CD4-positive, alpha-beta memory T cell (primary cell): ENCODE measurements at regions of chr14 and their contacts with region 1.

Region 1: DNA sequence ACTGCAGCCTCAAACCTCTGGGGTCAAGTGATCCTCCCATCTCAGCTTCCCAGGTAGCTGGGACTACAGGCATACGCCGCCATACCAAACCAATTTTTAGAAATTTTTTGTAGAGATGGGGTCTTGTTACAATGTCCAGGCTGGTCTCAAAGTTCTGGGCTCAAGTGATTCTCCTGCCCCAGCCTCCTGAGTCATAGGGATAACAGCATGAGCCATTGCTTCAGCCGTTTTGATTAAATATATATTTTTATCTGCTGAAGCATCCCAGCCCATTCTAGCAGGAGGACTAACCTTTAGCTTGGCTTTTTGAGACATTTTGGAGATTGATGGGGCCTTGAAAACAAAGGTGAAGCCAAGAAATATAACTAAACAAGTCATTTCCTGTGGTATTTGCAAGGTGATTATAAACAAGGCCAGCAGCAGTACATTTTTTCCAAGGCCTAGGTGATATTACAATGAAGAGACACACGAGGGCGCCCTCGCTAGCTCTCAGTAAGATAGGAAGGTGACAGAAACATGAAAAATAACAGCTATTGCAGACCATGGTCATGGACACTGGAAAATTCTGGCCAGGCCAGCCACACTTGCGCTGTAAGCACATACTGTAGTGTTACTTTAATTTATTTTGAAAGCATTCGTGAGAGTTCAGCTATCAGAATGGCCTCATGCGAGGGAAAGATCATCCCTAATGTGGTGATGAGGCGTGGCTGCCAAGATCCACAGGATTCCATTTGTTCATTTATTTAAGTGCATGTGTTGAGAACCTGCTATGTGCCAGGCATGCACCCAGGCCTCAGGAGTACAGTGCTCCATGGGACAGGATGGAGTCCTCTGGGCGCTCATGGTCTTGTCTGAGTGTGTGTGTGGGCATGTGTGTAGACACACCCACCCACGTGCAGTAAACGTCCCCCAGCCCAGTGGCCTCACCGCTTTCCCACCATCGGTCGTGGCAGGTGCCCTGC is 63.5 kb downstream of the DGLUCY start:
- DNase-seq: peak; percentile 75 to 79 (median 77)
- H3K4me3 ChIP-seq: no peak overlapping the region
- H3K4me3 Mint-ChIP-seq: no peak overlapping the region
- H3K27ac ChIP-seq: peak overlapping the region; percentile 35
- H3K27ac Mint-ChIP-seq: peak overlapping the region; percentile 65 to 97 (median 94)
- H3K4me1 ChIP-seq: peaks cover 12% of the 10 kb centered on the region
- H3K4me1 Mint-ChIP-seq: peaks cover 13 to 23% (median 15%) of the 10 kb centered on the region in 4 donors
- H3K27me3 ChIP-seq: no peaks in the 10 kb centered on the region
- H3K27me3 Mint-ChIP-seq: no peaks in the 10 kb centered on the region

Region 2: DNA sequence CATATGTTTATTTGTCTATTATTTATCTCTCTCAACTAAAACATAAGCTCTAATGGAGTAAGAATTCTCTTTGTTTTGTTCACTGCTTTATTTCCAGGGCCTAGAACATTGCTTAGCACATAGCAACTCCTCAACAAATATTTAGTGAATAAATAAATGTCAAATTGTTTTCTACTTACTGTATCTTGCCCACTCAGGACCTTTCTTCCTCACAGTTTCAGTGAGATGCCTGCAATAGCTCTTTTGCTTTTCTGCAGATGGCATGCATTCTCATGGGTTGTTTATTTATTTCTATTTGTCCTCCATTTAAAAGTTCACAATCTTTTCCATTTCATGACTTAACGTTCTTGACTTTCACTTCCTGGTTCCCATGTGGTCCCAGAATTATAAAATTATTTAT is 266.2 kb before region 1 on chr14:
- CTCF ChIA-PET with region 1: interaction called, 10 read pairs
- POLR2A ChIA-PET with region 1: no interaction called
- intact Hi-C with region 1: no loop called
- DNase-seq: no peak
- H3K4me3 ChIP-seq: no peak overlapping the region
- H3K4me3 Mint-ChIP-seq: no peak overlapping the region
- H3K27ac ChIP-seq: no peak overlapping the region
- H3K27ac Mint-ChIP-seq: peak overlapping the region in 3 of 7 donors; percentile 1 to 36 (median 19)
- H3K4me1 ChIP-seq: no peaks in the 10 kb centered on the region
- H3K4me1 Mint-ChIP-seq: peaks cover 0 to 11% (median 9%) of the 10 kb centered on the region in 4 donors
- H3K27me3 ChIP-seq: no peaks in the 10 kb centered on the region
- H3K27me3 Mint-ChIP-seq: no peaks in the 10 kb centered on the region

Region 3: GRCh38 chr14:91060351-91061055 is 116.9 kb before region 1 on chr14 and contains the start of gene RPS6KA5:
- CTCF ChIA-PET with region 1: interaction called, 32 read pairs
- POLR2A ChIA-PET with region 1: interaction called, 35 read pairs
- intact Hi-C with region 1: loop called (anchors 1 kb)
- DNase-seq: peak; percentile 99 to 100 (median 100)
- H3K4me3 ChIP-seq: peak within 1 kb of the TSS; percentile 17 to 78
- H3K4me3 Mint-ChIP-seq: peak within 1 kb of the TSS; percentile 87 to 90 (median 88)
- H3K27ac ChIP-seq: peak within 1 kb of the TSS; percentile 63
- H3K27ac Mint-ChIP-seq: peak within 1 kb of the TSS; percentile 73 to 90 (median 80)
- H3K4me1 ChIP-seq: peaks cover 67% of the 10 kb centered on the region
- H3K4me1 Mint-ChIP-seq: peaks cover 44 to 72% (median 57%) of the 10 kb centered on the region in 4 donors
- H3K27me3 ChIP-seq: no peaks in the 10 kb centered on the region
- H3K27me3 Mint-ChIP-seq: no peaks in the 10 kb centered on the region
- total RNA-seq, gene RPS6KA5: 42.9 to 44.7 TPM

Region 4: DNA sequence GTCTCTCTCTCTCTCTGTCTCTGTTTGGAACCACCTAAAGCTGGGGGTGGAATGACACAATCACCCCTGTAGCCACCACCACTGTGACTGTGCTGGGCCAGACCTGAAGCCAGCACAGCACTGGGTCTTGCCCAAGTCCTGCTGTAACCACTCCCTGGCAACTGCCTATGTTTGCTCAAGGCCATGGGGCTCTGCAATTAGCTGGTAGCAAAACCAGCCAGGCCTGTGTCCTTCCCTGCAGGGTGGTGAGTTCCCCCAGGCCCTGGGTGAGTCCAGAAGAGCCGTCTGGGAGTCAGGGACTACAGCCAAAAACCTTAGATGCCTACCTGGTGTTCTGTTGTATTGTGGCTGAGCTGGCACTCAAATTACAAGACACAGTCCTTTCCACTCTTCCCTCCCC is 12.7 kb before region 1 on chr14:
- CTCF ChIA-PET with region 1: interaction called, 24 read pairs
- POLR2A ChIA-PET with region 1: no interaction called
- intact Hi-C with region 1: no loop called
- DNase-seq: no peak
- H3K4me3 ChIP-seq: no peak overlapping the region
- H3K4me3 Mint-ChIP-seq: no peak overlapping the region
- H3K27ac ChIP-seq: no peak overlapping the region
- H3K27ac Mint-ChIP-seq: peak overlapping the region in 3 of 7 donors; percentile 42 to 73 (median 47)
- H3K4me1 ChIP-seq: no peaks in the 10 kb centered on the region
- H3K4me1 Mint-ChIP-seq: peaks cover 0 to 1% (median 0%) of the 10 kb centered on the region in 4 donors
- H3K27me3 ChIP-seq: no peaks in the 10 kb centered on the region
- H3K27me3 Mint-ChIP-seq: no peaks in the 10 kb centered on the region

Region 5: GRCh38 chr14:91228112-91229004 is 51.0 kb after region 1 on chr14:
- CTCF ChIA-PET with region 1: interaction called, 28 read pairs
- POLR2A ChIA-PET with region 1: interaction called, 9 read pairs
- intact Hi-C with region 1: loop called (anchors 2 kb)
- DNase-seq: peak; percentile 74 to 96 (median 77)
- H3K4me3 ChIP-seq: peak overlapping the region; percentile 2 to 28
- H3K4me3 Mint-ChIP-seq: peak overlapping the region; percentile 41 to 97 (median 86)
- H3K27ac ChIP-seq: peak overlapping the region; percentile 88
- H3K27ac Mint-ChIP-seq: peak overlapping the region; percentile 97 to 100 (median 99)
- H3K4me1 ChIP-seq: peaks cover 98% of the 10 kb centered on the region
- H3K4me1 Mint-ChIP-seq: peaks cover 78 to 100% (median 91%) of the 10 kb centered on the region in 4 donors
- H3K27me3 ChIP-seq: no peaks in the 10 kb centered on the region
- H3K27me3 Mint-ChIP-seq: no peaks in the 10 kb centered on the region

Region 6: GRCh38 chr14:91264151-91265150 is 87.1 kb after region 1 on chr14:
- CTCF ChIA-PET with region 1: interaction called, 11 read pairs
- POLR2A ChIA-PET with region 1: interaction called, 6 read pairs
- intact Hi-C with region 1: no loop called
- DNase-seq: peak in 2 of 5 donors; percentile 39 to 41
- H3K4me3 ChIP-seq: peak overlapping the region in 1 of 2 donors; percentile 32
- H3K4me3 Mint-ChIP-seq: peak overlapping the region; percentile 69 to 85 (median 79)
- H3K27ac ChIP-seq: peak overlapping the region; percentile 31
- H3K27ac Mint-ChIP-seq: peak overlapping the region in 6 of 7 donors; percentile 60 to 97 (median 84)
- H3K4me1 ChIP-seq: peaks cover 45% of the 10 kb centered on the region
- H3K4me1 Mint-ChIP-seq: peaks cover 39 to 69% (median 46%) of the 10 kb centered on the region in 4 donors
- H3K27me3 ChIP-seq: no peaks in the 10 kb centered on the region
- H3K27me3 Mint-ChIP-seq: no peaks in the 10 kb centered on the region

Region 7: DNA sequence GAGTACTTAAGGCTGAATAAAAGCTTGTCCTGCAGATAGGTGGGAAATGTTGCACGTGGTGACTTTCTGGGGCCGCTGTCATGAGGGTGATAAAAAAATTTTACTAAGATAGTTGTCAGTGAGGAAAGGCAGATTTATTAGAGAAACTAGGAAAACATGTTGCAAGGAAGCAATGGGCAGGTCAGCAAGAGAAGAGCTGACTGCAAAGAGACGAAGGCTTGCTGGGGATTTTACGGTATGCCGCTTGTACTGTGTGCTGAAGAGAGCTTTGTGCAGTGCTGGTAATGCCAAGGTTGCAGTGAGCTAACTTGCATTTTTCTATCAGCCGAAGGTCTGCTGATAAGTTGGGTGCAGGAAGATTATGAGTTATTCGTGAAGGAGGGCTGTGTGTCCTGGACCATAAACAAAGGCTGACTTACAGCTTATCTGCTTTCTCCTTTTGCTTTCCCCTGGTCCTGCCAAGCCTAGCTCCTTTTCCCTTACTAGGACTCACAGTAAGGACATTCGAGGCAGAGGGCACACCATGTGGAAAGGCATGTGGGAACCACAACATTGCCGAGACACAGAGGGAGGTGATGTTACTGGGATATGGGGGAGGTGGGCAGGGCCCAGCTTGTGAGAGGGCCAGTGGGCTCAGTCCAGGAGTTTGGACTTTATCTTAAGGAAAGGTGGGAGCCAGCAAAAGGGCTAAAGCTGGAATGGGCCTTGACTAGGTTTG is 247.6 kb after region 1 on chr14:
- CTCF ChIA-PET with region 1: interaction called, 13 read pairs
- POLR2A ChIA-PET with region 1: no interaction called
- intact Hi-C with region 1: no loop called
- DNase-seq: no peak
- H3K4me3 ChIP-seq: no peak overlapping the region
- H3K4me3 Mint-ChIP-seq: no peak overlapping the region
- H3K27ac ChIP-seq: no peak overlapping the region
- H3K27ac Mint-ChIP-seq: peak overlapping the region in 1 of 7 donors; percentile 18
- H3K4me1 ChIP-seq: peaks cover 8% of the 10 kb centered on the region
- H3K4me1 Mint-ChIP-seq: peaks cover 15 to 22% (median 21%) of the 10 kb centered on the region in 4 donors
- H3K27me3 ChIP-seq: no peaks in the 10 kb centered on the region
- H3K27me3 Mint-ChIP-seq: no peaks in the 10 kb centered on the region